ENCODE measurements at regions of chr3 and their contacts with region 1.

Region 1: GRCh38 chr3:129183569-129184395 is at the start of gene CNBP:
- DNase-seq: peak; percentile 93
- H3K4me3 Mint-ChIP-seq: peak within 1 kb of the TSS; percentile 96
- H3K27ac Mint-ChIP-seq: peak within 1 kb of the TSS; percentile 95
- H3K4me1 Mint-ChIP-seq: peaks cover 35% of the 10 kb centered on the region
- H3K27me3 Mint-ChIP-seq: no peaks in the 10 kb centered on the region
- total RNA-seq, gene CNBP: 490 to 500 TPM

Region 2: DNA sequence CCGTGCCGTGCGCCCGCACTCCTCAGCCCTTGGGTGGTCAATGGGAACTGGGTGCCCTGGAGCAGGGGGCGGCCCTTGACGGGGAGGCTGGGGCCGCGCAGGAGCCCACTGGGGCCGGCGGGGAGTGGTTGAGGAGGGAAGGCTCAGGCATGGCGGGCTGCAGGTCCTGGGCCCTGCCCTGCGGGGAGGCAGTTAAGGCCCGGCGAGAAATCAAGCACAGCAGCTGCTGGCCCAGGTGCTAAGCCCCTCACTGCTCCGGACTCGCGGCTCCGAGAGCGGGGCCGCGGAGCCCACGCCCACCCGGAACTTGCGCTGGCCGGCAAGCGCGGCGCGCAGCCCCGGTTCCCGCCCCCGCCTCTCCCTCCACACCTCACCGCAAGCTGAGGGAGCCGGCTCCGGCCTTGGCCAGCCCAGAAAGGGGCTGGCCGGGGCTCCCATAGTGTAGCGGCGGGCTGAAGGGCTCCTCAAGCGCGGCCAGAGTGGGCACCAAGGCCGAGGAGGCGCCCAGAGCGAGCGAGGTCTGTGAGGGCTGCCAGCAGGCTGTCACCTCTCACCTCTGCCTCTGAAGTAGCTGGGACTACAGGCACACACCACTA is 115.4 kb before region 1 on chr3:
- CTCF ChIA-PET with region 1: no interaction called
- intact Hi-C with region 1: no loop called
- DNase-seq: no peak
- H3K4me3 Mint-ChIP-seq: peak overlapping the region; percentile 56
- H3K27ac Mint-ChIP-seq: no peak overlapping the region
- H3K4me1 Mint-ChIP-seq: peaks cover 8% of the 10 kb centered on the region
- H3K27me3 Mint-ChIP-seq: peaks cover 3% of the 10 kb centered on the region

Region 3: GRCh38 chr3:129160891-129161859 is 22.6 kb before region 1 on chr3 and contains the start of gene ISY1:
- CTCF ChIA-PET with region 1: interaction called, 13 read pairs
- intact Hi-C with region 1: loop called (anchors 1 kb)
- DNase-seq: peak; percentile 91
- H3K4me3 Mint-ChIP-seq: peak within 1 kb of the TSS; percentile 87
- H3K27ac Mint-ChIP-seq: peak within 1 kb of the TSS; percentile 99
- H3K4me1 Mint-ChIP-seq: peaks cover 31% of the 10 kb centered on the region
- H3K27me3 Mint-ChIP-seq: no peaks in the 10 kb centered on the region
- total RNA-seq, gene ISY1: 56.8 to 65.4 TPM

Region 4: GRCh38 chr3:129230311-129231019 is 46.7 kb after region 1 on chr3:
- CTCF ChIA-PET with region 1: interaction called, 5 read pairs
- intact Hi-C with region 1: loop called (anchors 2 kb)
- DNase-seq: peak; percentile 54
- H3K4me3 Mint-ChIP-seq: no peak overlapping the region
- H3K27ac Mint-ChIP-seq: peak overlapping the region; percentile 31
- H3K4me1 Mint-ChIP-seq: peaks cover 17% of the 10 kb centered on the region
- H3K27me3 Mint-ChIP-seq: no peaks in the 10 kb centered on the region

Region 5: GRCh38 chr3:129278439-129278970 is 94.7 kb after region 1 on chr3 and contains the start of gene HMCES:
- CTCF ChIA-PET with region 1: no interaction called
- intact Hi-C with region 1: loop called (anchors 1 kb)
- DNase-seq: peak; percentile 96
- H3K4me3 Mint-ChIP-seq: peak within 1 kb of the TSS; percentile 87
- H3K27ac Mint-ChIP-seq: peak within 1 kb of the TSS; percentile 90
- H3K4me1 Mint-ChIP-seq: peaks cover 48% of the 10 kb centered on the region
- H3K27me3 Mint-ChIP-seq: no peaks in the 10 kb centered on the region
- total RNA-seq, gene HMCES: 35.0 to 35.8 TPM

Region 6: GRCh38 chr3:129316131-129317013 is 132.6 kb after region 1 on chr3:
- CTCF ChIA-PET with region 1: no interaction called
- intact Hi-C with region 1: loop called (anchors 1 kb)
- DNase-seq: peak; percentile 87
- H3K4me3 Mint-ChIP-seq: peak overlapping the region; percentile 96
- H3K27ac Mint-ChIP-seq: peak overlapping the region; percentile 85
- H3K4me1 Mint-ChIP-seq: peaks cover 14% of the 10 kb centered on the region
- H3K27me3 Mint-ChIP-seq: no peaks in the 10 kb centered on the region

Region 7: GRCh38 chr3:130111185-130111864 is 927.5 kb after region 1 on chr3:
- CTCF ChIA-PET with region 1: no interaction called
- intact Hi-C with region 1: loop called (anchors 5 kb)
- DNase-seq: peak; percentile 99
- H3K4me3 Mint-ChIP-seq: peak overlapping the region; percentile 92
- H3K27ac Mint-ChIP-seq: peak overlapping the region; percentile 95
- H3K4me1 Mint-ChIP-seq: peaks cover 18% of the 10 kb centered on the region
- H3K27me3 Mint-ChIP-seq: no peaks in the 10 kb centered on the region

Measured in activated naive CD4-positive, alpha-beta T cell treated with anti-CD3 and anti-CD28 coated beads for 36 hours (primary cell).